WTC11 (cell line): ENCODE measurements at regions of chr19 and their contacts with region 1.

Region 1: GRCh38 chr19:49473868-49474544 is at the start of gene FLT3LG:
- DNase-seq: peak; percentile 67
- ATAC-seq: no peak
- H3K4me3 Mint-ChIP-seq: peak within 1 kb of the TSS; percentile 67
- H3K27ac Mint-ChIP-seq: no peak within 1 kb of the TSS
- H3K4me1 Mint-ChIP-seq: peaks cover 12% of the 10 kb centered on the region
- H3K27me3 Mint-ChIP-seq: peaks cover 17% of the 10 kb centered on the region
- CTCF ChIP-seq: peak; percentile 96
- total RNA-seq, gene FLT3LG: 2.9 to 5.3 TPM (median 3.6 TPM) in 3 replicates

Region 2: DNA sequence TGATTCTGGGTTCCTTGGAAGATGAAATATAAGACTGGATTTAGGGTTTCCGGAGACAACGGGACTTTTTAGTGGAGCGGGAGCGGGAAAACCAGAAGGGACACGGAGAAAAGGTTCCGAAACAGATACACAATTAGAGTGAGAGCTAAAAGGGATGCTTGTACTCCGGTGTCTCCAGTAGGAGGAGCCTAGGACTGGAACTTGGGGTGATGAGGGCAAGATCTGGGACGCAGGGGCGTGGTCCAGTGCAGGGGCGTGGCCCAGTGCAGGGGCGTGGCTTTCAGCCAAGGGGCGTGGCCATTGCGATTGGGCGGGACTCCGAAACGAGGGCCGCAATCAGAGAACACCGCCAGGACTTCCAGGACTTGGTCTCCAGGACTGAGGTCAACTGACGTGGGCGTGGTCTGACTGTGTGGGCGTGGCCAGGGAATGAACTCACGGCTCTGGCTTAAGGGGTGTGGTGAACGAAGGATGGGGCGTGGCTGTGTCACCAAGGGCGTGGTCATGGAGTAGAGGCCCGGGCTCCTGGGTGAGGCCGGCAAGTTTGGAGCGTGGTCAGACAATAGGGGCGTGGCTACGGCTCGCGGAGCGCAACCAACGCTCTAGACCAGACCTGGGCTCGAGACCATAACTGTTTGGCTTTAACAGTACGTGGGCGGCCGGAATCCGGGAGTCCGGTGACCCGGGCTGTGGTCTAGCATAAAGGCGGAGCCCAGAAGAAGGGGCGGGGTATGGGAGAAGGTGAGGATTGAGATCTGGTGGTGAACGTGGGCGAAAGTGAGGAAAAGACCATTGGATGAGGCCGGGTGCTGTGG is 110.5 kb before region 1 on chr19 and contains the start of gene DKKL1:
- CTCF ChIA-PET with region 1: interaction called, 11 read pairs
- POLR2A ChIA-PET with region 1: no interaction called
- DNase-seq: peak; percentile 100
- ATAC-seq: peak; percentile 88
- H3K4me3 Mint-ChIP-seq: no peak within 1 kb of the TSS
- H3K27ac Mint-ChIP-seq: no peak within 1 kb of the TSS
- H3K4me1 Mint-ChIP-seq: peaks cover 8% of the 10 kb centered on the region
- H3K27me3 Mint-ChIP-seq: peaks cover 5% of the 10 kb centered on the region
- CTCF ChIP-seq: no peak
- total RNA-seq, gene DKKL1: 2.4 to 3.0 TPM (median 2.9 TPM) in 3 replicates

Region 3: GRCh38 chr19:49403404-49404187 is 70.4 kb before region 1 on chr19:
- CTCF ChIA-PET with region 1: interaction called, 11 read pairs
- POLR2A ChIA-PET with region 1: interaction called, 3 read pairs
- DNase-seq: peak; percentile 81
- ATAC-seq: peak; percentile 98
- H3K4me3 Mint-ChIP-seq: peak overlapping the region; percentile 44
- H3K27ac Mint-ChIP-seq: peak overlapping the region; percentile 99
- H3K4me1 Mint-ChIP-seq: peaks cover 45% of the 10 kb centered on the region
- H3K27me3 Mint-ChIP-seq: peaks cover 4% of the 10 kb centered on the region; the same call in 1 of the 2 replicates
- CTCF ChIP-seq: no peak

Region 4: DNA sequence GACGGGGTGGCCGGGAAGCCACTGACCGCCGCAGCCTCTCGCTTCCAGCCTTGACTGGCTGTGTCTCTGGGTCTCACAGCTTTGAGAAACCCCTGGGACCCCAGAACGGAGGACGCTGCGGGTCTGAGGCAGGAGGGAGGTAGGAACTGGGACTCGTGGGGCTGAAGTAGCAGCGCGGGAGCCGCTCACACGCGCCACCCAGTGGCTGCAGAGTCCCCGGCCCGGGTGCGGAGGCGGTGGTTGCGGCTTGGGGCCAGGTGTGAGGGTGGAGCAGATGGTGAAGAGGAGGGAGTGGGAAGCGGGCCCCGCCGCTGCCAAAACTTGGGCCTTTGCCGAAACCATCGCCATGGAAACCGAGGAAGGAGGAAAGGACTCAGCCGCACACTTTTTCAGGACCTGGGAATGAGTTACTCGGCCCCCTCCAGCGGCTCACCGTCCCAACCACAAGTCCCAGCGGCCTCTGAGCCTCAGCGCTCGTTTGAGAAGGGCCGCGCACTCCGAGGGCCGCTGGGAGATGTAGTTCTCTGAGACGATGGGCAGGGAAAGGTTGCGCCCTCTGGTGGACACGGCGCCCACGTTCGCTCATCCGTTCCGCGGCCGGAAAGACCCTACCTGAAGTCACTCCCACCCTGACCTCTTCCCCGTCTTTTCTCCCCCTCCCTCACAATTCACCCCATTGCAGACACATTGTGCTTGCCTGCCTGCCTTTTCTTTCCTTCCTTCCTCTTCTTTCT is 30.5 kb before region 1 on chr19:
- CTCF ChIA-PET with region 1: interaction called, 19 read pairs
- POLR2A ChIA-PET with region 1: no interaction called
- DNase-seq: peak; percentile 97
- ATAC-seq: peak; percentile 43
- H3K4me3 Mint-ChIP-seq: peak overlapping the region; percentile 63
- H3K27ac Mint-ChIP-seq: no peak overlapping the region
- H3K4me1 Mint-ChIP-seq: peaks cover 35% of the 10 kb centered on the region
- H3K27me3 Mint-ChIP-seq: peaks cover 39% of the 10 kb centered on the region
- CTCF ChIP-seq: peak; percentile 79

Region 5: DNA sequence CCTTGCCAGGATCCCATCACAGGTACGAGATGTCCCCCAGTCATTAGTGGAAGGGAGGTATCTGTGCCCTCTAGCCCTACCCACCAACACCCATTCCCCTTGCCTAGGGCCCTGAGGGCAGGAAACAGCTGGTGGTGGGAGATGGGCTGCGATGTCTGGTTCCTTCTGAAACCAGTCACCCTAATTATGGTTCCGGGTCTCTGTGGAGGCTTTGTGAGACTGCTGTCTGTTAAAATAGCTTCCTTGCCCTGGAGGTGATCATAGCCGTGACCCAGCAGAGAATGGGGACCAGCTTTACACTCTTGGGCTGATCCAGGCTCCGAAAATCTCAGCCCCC is 15.5 kb before region 1 on chr19:
- CTCF ChIA-PET with region 1: interaction called, 15 read pairs
- POLR2A ChIA-PET with region 1: interaction called, 7 read pairs
- DNase-seq: no peak
- ATAC-seq: no peak
- H3K4me3 Mint-ChIP-seq: no peak overlapping the region
- H3K27ac Mint-ChIP-seq: no peak overlapping the region
- H3K4me1 Mint-ChIP-seq: peaks cover 4% of the 10 kb centered on the region; the same call in 1 of the 2 replicates
- H3K27me3 Mint-ChIP-seq: no peaks in the 10 kb centered on the region
- CTCF ChIP-seq: no peak

Region 6: GRCh38 chr19:49546825-49547565 is 73.0 kb after region 1 on chr19:
- CTCF ChIA-PET with region 1: interaction called, 19 read pairs
- POLR2A ChIA-PET with region 1: interaction called, 4 read pairs
- DNase-seq: peak; percentile 71
- ATAC-seq: peak; percentile 83
- H3K4me3 Mint-ChIP-seq: peak overlapping the region; percentile 52
- H3K27ac Mint-ChIP-seq: peak overlapping the region; percentile 67
- H3K4me1 Mint-ChIP-seq: peaks cover 4% of the 10 kb centered on the region
- H3K27me3 Mint-ChIP-seq: no peaks in the 10 kb centered on the region
- CTCF ChIP-seq: peak; percentile 72